MCF 10A (cell line): ENCODE measurements at regions of chr3 and their contacts with region 1.

Region 1: DNA sequence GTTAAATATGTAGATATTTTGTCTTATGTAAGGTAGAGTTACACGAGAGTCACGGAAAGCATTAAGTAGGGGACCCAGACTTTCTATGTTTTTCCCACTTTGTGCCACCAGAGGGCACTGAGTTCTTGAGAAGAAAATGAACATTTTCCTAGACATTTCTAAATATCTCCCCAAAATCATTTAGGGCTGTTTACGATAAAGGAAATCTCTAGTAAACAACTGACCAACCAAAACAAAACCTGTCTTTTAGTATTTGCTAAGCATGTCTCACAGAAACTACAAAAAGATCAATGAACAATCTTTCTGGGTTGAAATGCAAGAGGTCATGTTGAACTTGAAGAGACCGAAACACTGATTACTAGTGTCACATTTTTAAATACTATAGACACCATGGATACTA is 16.1 kb downstream of the POU1F1 start:
- DNase-seq: peak; percentile 69
- H3K4me3 Mint-ChIP-seq: no peak overlapping the region
- H3K27ac Mint-ChIP-seq: no peak overlapping the region
- H3K4me1 Mint-ChIP-seq: no peaks in the 10 kb centered on the region
- H3K27me3 Mint-ChIP-seq: no peaks in the 10 kb centered on the region
- CTCF ChIP-seq: peak; percentile 53

Region 2: DNA sequence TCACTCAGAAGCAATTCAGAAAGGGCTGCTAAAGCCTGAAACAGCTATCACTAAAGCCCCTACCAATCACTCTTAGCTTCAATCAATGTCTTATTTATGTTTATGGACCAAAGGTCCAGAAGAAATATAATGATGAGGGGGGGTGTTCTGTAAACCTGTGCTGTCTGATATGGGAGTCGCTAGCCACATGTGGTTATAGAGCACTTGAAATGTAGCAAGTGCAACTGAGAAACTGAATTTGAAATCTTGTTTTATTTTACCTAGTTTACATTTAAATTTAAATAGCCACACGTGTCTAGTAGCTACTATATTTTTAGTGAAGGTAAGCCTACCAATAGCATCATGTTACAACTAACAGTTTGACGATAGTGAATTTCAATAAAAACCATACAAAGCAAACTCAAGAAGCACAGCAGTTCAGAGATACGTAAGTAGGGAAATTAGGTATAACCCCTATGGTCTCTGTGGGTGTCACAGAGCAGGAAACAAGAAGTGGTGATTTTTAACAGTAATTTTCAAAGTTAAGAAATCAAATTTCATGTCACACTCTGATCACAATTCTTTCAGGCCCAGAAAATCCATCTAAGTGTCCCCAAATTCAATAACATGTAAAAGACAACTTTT is 12.6 kb after region 1 on chr3:
- CTCF ChIA-PET with region 1: interaction called, 25 read pairs
- POLR2A ChIA-PET with region 1: no interaction called
- intact Hi-C with region 1: no loop called
- DNase-seq: no peak
- H3K4me3 Mint-ChIP-seq: no peak overlapping the region
- H3K27ac Mint-ChIP-seq: no peak overlapping the region
- H3K4me1 Mint-ChIP-seq: no peaks in the 10 kb centered on the region
- H3K27me3 Mint-ChIP-seq: no peaks in the 10 kb centered on the region
- CTCF ChIP-seq: no peak

Region 3: GRCh38 chr3:87503900-87504508 is 243.7 kb after region 1 on chr3:
- CTCF ChIA-PET with region 1: interaction called, 14 read pairs
- POLR2A ChIA-PET with region 1: no interaction called
- intact Hi-C with region 1: loop called (anchors 1 kb)
- DNase-seq: peak; percentile 81
- H3K4me3 Mint-ChIP-seq: no peak overlapping the region
- H3K27ac Mint-ChIP-seq: no peak overlapping the region
- H3K4me1 Mint-ChIP-seq: no peaks in the 10 kb centered on the region
- H3K27me3 Mint-ChIP-seq: no peaks in the 10 kb centered on the region
- CTCF ChIP-seq: peak; percentile 70

Region 4: DNA sequence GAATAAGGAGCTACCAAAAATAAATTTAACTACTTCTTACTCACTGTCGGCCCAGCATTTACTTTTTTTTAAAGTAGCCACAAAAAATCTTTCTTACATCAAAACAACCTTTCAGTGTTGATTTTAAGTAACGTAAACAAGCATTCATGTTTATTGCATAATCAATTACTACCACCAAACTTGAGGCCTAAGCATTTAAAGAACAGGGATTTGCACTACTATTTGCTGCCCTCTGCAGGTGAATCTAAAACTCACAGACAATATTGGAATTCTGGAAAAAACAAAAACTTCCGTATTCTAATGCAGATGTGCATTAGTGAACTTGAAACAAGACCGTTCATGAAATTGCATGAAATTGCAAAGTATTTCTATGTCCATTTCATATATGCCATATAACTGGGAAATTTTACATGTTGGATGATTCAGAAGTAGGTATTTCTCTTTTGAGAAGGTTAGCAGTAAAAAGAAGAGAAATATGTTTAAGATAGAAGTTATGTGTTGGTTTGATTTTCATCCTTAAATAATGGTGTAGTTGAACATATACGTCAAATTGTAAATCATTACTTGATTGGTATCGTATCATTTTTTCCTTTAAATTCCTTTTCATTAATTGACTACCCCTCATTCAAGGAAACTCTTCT is 743.0 kb after region 1 on chr3:
- CTCF ChIA-PET with region 1: interaction called, 21 read pairs
- POLR2A ChIA-PET with region 1: no interaction called
- intact Hi-C with region 1: loop called (anchors 1 kb)
- DNase-seq: peak; percentile 68
- H3K4me3 Mint-ChIP-seq: no peak overlapping the region
- H3K27ac Mint-ChIP-seq: no peak overlapping the region
- H3K4me1 Mint-ChIP-seq: no peaks in the 10 kb centered on the region
- H3K27me3 Mint-ChIP-seq: no peaks in the 10 kb centered on the region
- CTCF ChIP-seq: peak; percentile 69

Region 5: GRCh38 chr3:88010810-88011209 is 750.5 kb after region 1 on chr3:
- CTCF ChIA-PET with region 1: interaction called, 21 read pairs
- POLR2A ChIA-PET with region 1: no interaction called
- intact Hi-C with region 1: no loop called
- DNase-seq: no peak
- H3K4me3 Mint-ChIP-seq: no peak overlapping the region
- H3K27ac Mint-ChIP-seq: no peak overlapping the region
- H3K4me1 Mint-ChIP-seq: no peaks in the 10 kb centered on the region
- H3K27me3 Mint-ChIP-seq: no peaks in the 10 kb centered on the region
- CTCF ChIP-seq: no peak